Naive thymus-derived CD4-positive, alpha-beta T cell (primary cell): ENCODE measurements at regions of chr6 and their contacts with region 1.

Region 1: GRCh38 chr6:125769147-125769783 is 19.8 kb downstream of the HEY2 start:
- DNase-seq: no peak
- ATAC-seq: no peak
- H3K4me3 ChIP-seq: no peak overlapping the region
- H3K4me3 Mint-ChIP-seq: no peak overlapping the region
- H3K27ac ChIP-seq: no peak overlapping the region
- H3K27ac Mint-ChIP-seq: no peak overlapping the region
- H3K4me1 ChIP-seq: no peaks in the 10 kb centered on the region
- H3K4me1 Mint-ChIP-seq: peaks cover 0 to 4% (median 1%) of the 10 kb centered on the region in 7 donors
- H3K27me3 ChIP-seq: no peaks in the 10 kb centered on the region
- H3K27me3 Mint-ChIP-seq: peaks cover 7 to 48% (median 24%) of the 10 kb centered on the region in 5 donors

Region 2: GRCh38 chr6:125153391-125154117 is 615.7 kb before region 1 on chr6 and contains the start of gene TPD52L1:
- CTCF ChIA-PET with region 1: no interaction called
- POLR2A ChIA-PET with region 1: no interaction called
- intact Hi-C with region 1: loop called (anchors 1 to 2 kb)
- DNase-seq: peak; percentile 23 to 68 (median 35)
- ATAC-seq: peak; percentile 87
- H3K4me3 ChIP-seq: peak within 1 kb of the TSS; percentile 55
- H3K4me3 Mint-ChIP-seq: peak within 1 kb of the TSS; percentile 72 to 87 (median 78)
- H3K27ac ChIP-seq: no peak within 1 kb of the TSS
- H3K27ac Mint-ChIP-seq: no peak within 1 kb of the TSS
- H3K4me1 ChIP-seq: peaks cover 0 to 5% of the 10 kb centered on the region in 2 donors
- H3K4me1 Mint-ChIP-seq: peaks cover 0 to 14% (median 10%) of the 10 kb centered on the region in 7 donors
- H3K27me3 ChIP-seq: peaks cover 0 to 4% of the 10 kb centered on the region in 2 donors
- H3K27me3 Mint-ChIP-seq: peaks cover 24 to 54% (median 45%) of the 10 kb centered on the region in 5 donors
- total RNA-seq, gene TPD52L1: 0.15 TPM in 1 of 5 experiments, not detected in the others

Region 3: GRCh38 chr6:125191916-125192609 is 577.2 kb before region 1 on chr6:
- CTCF ChIA-PET with region 1: no interaction called
- POLR2A ChIA-PET with region 1: no interaction called
- intact Hi-C with region 1: loop called in 1 of 2 experiments (anchors 1 kb)
- DNase-seq: peak in 8 of 9 donors; percentile 31 to 56 (median 46)
- ATAC-seq: peak; percentile 89
- H3K4me3 ChIP-seq: no peak overlapping the region
- H3K4me3 Mint-ChIP-seq: no peak overlapping the region
- H3K27ac ChIP-seq: no peak overlapping the region
- H3K27ac Mint-ChIP-seq: no peak overlapping the region
- H3K4me1 ChIP-seq: no peaks in the 10 kb centered on the region
- H3K4me1 Mint-ChIP-seq: peaks cover 0 to 4% (median 0%) of the 10 kb centered on the region in 7 donors
- H3K27me3 ChIP-seq: no peaks in the 10 kb centered on the region
- H3K27me3 Mint-ChIP-seq: peaks cover 0 to 6% (median 3%) of the 10 kb centered on the region in 5 donors

Region 4: DNA sequence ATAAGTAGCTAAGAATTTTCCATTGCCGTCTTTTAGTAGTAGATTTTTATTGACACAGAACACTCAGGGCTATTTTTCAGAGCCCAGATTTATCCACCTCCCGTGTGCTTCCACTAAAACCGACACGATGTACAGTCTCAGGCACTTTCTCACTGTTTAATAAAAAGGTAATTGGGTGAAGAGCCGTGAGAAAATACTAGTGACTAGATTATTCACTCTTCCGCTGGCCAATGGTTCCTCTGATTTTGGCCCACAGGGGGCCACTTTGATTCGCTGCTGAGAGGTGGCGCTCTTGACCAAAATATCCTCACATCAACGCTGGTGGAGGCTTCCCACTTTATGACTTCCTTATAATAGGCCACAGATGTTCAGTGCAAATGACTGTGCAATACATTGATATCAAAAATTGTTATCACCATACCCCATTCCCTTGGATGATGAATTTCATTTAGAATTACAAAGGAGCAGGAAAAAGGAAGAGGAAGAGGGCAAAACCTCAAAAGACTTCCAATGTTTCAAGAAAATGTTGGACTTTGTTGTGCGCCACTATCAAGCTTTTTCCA is 455.2 kb before region 1 on chr6:
- CTCF ChIA-PET with region 1: interaction called, 8 read pairs
- POLR2A ChIA-PET with region 1: interaction called, 3 read pairs
- intact Hi-C with region 1: loop called (anchors 1 kb)
- DNase-seq: peak in 3 of 9 donors; percentile 17 to 27 (median 22)
- ATAC-seq: peak; percentile 76
- H3K4me3 ChIP-seq: no peak overlapping the region
- H3K4me3 Mint-ChIP-seq: no peak overlapping the region
- H3K27ac ChIP-seq: no peak overlapping the region
- H3K27ac Mint-ChIP-seq: no peak overlapping the region
- H3K4me1 ChIP-seq: no peaks in the 10 kb centered on the region
- H3K4me1 Mint-ChIP-seq: peaks cover 0 to 2% (median 0%) of the 10 kb centered on the region in 7 donors
- H3K27me3 ChIP-seq: peaks cover 0 to 6% of the 10 kb centered on the region in 2 donors
- H3K27me3 Mint-ChIP-seq: peaks cover 0 to 22% (median 4%) of the 10 kb centered on the region in 5 donors

Region 5: GRCh38 chr6:125512621-125513020 is 256.6 kb before region 1 on chr6:
- CTCF ChIA-PET with region 1: no interaction called
- POLR2A ChIA-PET with region 1: no interaction called
- intact Hi-C with region 1: loop called in 1 of 2 experiments (anchors 1 kb)
- DNase-seq: peak in 1 of 9 donors; percentile 9
- ATAC-seq: no peak
- H3K4me3 ChIP-seq: no peak overlapping the region
- H3K4me3 Mint-ChIP-seq: no peak overlapping the region
- H3K27ac ChIP-seq: no peak overlapping the region
- H3K27ac Mint-ChIP-seq: no peak overlapping the region
- H3K4me1 ChIP-seq: no peaks in the 10 kb centered on the region
- H3K4me1 Mint-ChIP-seq: no peaks in the 10 kb centered on the region
- H3K27me3 ChIP-seq: no peaks in the 10 kb centered on the region
- H3K27me3 Mint-ChIP-seq: peaks cover 10 to 37% (median 19%) of the 10 kb centered on the region in 5 donors